Right ventricle myocardium inferior (tissue), 1 donor: ENCODE measurements at regions of chr17 and their contacts with region 1.

Region 1: DNA sequence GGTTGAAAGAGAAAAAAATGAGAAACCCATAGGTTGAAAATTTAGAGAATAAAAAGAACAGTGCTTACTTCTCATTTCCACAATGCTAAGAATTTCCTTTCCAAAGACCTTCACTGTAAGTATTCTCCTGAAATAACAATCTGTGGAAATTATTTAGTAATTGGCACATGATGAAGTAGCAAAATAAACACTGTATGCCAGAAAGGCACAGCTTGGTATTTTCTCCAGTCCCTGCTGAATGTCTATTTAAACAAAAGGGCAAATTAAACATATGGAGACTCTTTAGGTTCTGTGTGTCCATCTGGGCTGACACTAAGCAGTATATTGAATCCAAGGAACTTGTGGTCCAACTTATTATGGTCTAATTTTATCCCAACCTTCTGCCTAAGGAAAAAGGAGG is 46.1 kb downstream of the CHCT1 start:
- DNase-seq: no peak
- ATAC-seq: no peak

Region 2: GRCh38 chr17:60327122-60327900 is 141.1 kb before region 1 on chr17:
- intact Hi-C with region 1: no loop called
- DNase-seq: no peak
- ATAC-seq: no peak

Region 3: GRCh38 chr17:60421935-60422662 is 46.3 kb before region 1 on chr17 and contains the start of gene CHCT1:
- intact Hi-C with region 1: no loop called
- DNase-seq: no peak
- ATAC-seq: peak; percentile 38
- total RNA-seq, gene CHCT1: not detected

Region 4: GRCh38 chr17:60630352-60630751 is 162.0 kb after region 1 on chr17:
- intact Hi-C with region 1: loop called (anchors 10 kb)
- DNase-seq: no peak
- ATAC-seq: no peak